ENCODE measurements at regions of chr5 and their contacts with region 1.

Region 1: DNA sequence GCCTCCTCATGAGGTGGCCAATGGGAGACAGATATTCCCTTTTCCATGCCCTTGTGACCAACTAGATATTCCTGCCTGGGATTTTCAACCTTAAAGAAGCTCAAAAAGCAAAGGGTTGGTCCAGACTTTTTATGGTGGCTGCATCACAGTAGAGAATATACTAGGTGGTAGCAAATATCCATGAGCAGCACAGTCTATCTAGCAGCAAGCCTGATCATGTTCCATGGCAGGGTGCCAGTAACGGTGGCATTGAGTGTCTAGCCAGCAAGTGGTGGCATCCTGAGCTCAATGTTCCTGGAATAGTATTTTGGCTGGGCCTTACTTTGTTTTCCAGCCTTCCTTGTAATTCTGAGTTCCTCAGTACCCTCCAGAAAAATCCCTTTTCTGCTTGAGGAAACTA is 25.8 kb downstream of the CDC25C start:
- DNase-seq: no peak
- ATAC-seq: no peak
- H3K4me3 Mint-ChIP-seq: no peak overlapping the region
- H3K27ac Mint-ChIP-seq: no peak overlapping the region
- H3K4me1 Mint-ChIP-seq: no peaks in the 10 kb centered on the region
- H3K27me3 Mint-ChIP-seq: no peaks in the 10 kb centered on the region

Region 2: DNA sequence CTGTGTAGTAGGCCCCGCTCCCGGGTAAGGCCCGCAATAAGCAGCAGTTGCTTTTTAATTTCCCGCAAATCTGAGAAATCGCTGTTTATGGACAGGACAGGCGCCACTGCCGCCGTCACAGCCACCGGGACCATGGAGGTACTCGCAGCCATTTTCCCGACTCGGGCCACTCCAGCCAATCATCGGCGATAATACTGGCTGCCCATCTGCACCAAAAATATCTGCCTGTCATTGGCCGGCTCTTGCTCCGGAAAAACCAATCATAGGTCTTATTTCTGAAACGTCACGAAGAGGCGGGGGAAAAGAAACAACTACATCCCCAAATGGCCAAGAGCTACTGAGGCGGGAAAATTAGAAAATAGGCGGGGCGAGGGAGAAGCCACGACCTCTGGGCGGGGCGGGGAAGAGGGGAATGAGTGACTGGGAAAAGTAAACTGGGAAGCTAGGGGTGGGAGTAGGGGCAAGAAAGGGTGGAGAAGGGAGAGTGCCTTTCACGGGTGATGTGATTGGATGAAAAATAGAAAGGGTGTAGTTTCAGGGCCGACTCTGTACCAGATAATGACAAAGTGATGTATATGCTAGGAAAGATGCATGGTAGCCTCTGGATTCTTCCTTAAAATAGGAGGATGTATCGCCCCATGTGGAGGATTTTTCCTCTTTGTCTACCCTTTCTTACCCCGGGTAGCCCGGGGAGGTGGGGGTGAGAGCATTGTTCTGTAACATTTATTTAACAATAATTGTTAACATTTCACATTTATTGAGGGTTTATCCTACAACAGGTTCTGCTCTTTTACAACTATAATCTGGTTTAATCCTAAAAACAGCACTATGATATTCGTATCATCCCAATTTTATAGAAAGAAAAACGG is 92.4 kb before region 1 on chr5 and contains the start of gene CDC23:
- CTCF ChIA-PET with region 1: no interaction called
- POLR2A ChIA-PET with region 1: no interaction called
- intact Hi-C with region 1: no loop called
- DNase-seq: peak; percentile 94
- ATAC-seq: peak; percentile 98
- H3K4me3 Mint-ChIP-seq: peak within 1 kb of the TSS; percentile 92
- H3K27ac Mint-ChIP-seq: peak within 1 kb of the TSS; percentile 94
- H3K4me1 Mint-ChIP-seq: peaks cover 16% of the 10 kb centered on the region
- H3K27me3 Mint-ChIP-seq: no peaks in the 10 kb centered on the region
- total RNA-seq, gene CDC23: 34.0 to 38.1 TPM

Region 3: GRCh38 chr5:138238034-138238433 is 67.8 kb before region 1 on chr5:
- CTCF ChIA-PET with region 1: no interaction called
- POLR2A ChIA-PET with region 1: no interaction called
- intact Hi-C with region 1: loop called in 1 of 2 experiments (anchors 5 kb)
- DNase-seq: no peak
- ATAC-seq: no peak
- H3K4me3 Mint-ChIP-seq: no peak overlapping the region
- H3K27ac Mint-ChIP-seq: no peak overlapping the region
- H3K4me1 Mint-ChIP-seq: peaks cover 12% of the 10 kb centered on the region
- H3K27me3 Mint-ChIP-seq: peaks cover 26% of the 10 kb centered on the region

Region 4: DNA sequence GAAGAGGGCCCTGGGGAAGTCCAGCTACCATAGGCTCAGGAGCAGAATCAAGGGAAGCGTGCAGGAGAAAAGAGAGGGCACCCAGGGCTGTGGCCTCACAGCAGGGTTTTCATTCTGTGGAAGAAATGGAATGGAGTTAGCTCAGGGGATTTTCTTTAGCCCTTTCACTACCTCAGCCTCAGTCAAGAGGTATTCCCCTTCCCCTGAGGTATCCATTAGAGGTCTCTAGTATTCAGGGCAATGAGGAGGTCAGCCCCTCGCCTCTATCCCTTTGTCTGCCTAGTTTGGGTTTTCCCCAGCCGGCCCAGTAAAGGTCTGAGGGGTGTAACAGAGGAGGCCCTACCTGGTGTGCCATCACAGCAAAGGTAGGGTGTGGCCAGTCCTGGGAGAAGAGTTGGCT is 52.9 kb before region 1 on chr5:
- CTCF ChIA-PET with region 1: no interaction called
- POLR2A ChIA-PET with region 1: no interaction called
- intact Hi-C with region 1: loop called in 1 of 2 experiments (anchors 5 kb)
- DNase-seq: no peak
- ATAC-seq: no peak
- H3K4me3 Mint-ChIP-seq: no peak overlapping the region
- H3K27ac Mint-ChIP-seq: no peak overlapping the region
- H3K4me1 Mint-ChIP-seq: no peaks in the 10 kb centered on the region
- H3K27me3 Mint-ChIP-seq: no peaks in the 10 kb centered on the region

Region 5: GRCh38 chr5:139438707-139439012 is 1132.9 kb after region 1 on chr5:
- CTCF ChIA-PET with region 1: no interaction called
- POLR2A ChIA-PET with region 1: no interaction called
- intact Hi-C with region 1: no loop called
- DNase-seq: no peak
- ATAC-seq: no peak
- H3K4me3 Mint-ChIP-seq: peak overlapping the region; percentile 94
- H3K27ac Mint-ChIP-seq: peak overlapping the region; percentile 99
- H3K4me1 Mint-ChIP-seq: peaks cover 49% of the 10 kb centered on the region
- H3K27me3 Mint-ChIP-seq: no peaks in the 10 kb centered on the region

Measured in activated CD4-positive, alpha-beta T cell treated with anti-CD3 and anti-CD28 coated beads for 36 hours (primary cell).